Panc1 (cell line): ENCODE measurements at regions of chr5 and their contacts with region 1.

Region 1: DNA sequence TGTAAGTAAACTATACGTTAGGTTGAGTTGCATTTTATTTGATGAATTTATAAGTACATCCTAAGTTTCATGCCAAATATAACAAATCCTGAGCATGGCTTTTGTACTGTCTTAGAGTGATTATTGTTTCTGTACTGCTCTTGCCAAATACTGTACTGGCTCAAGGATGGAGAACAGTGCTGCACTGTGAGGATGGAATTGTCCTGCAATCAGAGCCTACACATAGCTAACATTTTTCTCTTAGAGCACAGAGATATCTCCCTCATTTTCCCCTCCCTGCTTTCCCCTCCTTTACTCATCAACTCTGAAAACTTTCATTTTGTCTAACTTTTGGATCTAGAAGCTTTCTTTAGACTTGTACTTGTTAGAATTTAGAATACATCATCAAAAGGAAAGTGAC is 28.3 kb downstream of the LRRC70 start:
- DNase-seq: no peak
- ATAC-seq: no peak
- H3K4me3 ChIP-seq: no peak overlapping the region
- H3K27ac ChIP-seq: no peak overlapping the region
- H3K4me1 ChIP-seq: no peaks in the 10 kb centered on the region
- H3K27me3 ChIP-seq: no peaks in the 10 kb centered on the region
- CTCF ChIP-seq: no peak

Region 2: DNA sequence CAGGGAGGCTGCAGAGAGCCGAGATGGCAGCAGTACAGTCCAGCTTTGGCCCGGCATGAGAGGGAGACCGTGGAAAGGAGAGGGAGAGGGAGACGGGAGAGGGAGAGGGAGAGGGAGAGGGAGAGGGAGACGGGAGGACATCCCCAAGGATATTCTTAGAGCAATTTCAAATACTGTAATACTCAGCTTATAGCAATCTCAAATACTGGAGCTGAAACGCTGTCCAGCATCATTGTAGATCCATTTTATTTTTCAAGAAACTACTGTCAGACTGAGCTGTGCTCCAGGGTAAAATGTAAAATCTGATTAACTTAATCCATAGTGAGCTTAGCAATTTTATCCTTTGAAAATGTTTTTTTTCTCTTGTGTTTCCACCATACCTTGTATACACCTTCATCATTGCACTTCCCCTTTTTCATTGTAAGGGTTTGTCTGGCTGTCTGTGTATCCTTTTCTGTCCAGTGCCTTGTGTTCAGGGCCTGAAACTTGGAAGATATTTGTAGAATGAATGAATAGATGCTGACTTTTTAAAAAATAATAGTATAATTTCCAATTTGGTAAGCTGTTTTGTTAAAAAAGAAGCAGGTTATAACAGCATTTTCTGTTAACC is 92.3 kb before region 1 on chr5:
- CTCF ChIA-PET with region 1: no interaction called
- POLR2A ChIA-PET with region 1: interaction called, 11 read pairs
- in situ Hi-C with region 1: no loop called
- intact Hi-C with region 1: no loop called
- DNase-seq: no peak
- ATAC-seq: no peak
- H3K4me3 ChIP-seq: no peak overlapping the region
- H3K27ac ChIP-seq: no peak overlapping the region
- H3K4me1 ChIP-seq: no peaks in the 10 kb centered on the region
- H3K27me3 ChIP-seq: no peaks in the 10 kb centered on the region
- CTCF ChIP-seq: no peak